HCT116 (cell line): ENCODE measurements at regions of chr22 and their contacts with region 1.

Region 1: GRCh38 chr22:32985899-32986765 is 72.0 kb downstream of the SYN3 start:
- DNase-seq: peak; percentile 57
- ATAC-seq: peak; percentile 99
- H3K4me3 ChIP-seq: no peak overlapping the region
- H3K27ac ChIP-seq: no peak overlapping the region
- H3K4me1 ChIP-seq: peaks cover 0 to 2% of the 10 kb centered on the region in 2 experiments; a peak in 1 of 4 replicates
- H3K27me3 ChIP-seq: no peaks in the 10 kb centered on the region
- CTCF ChIP-seq: peak; percentile 44 to 86 (median 75); a peak in 5 of 6 replicates
- POLR2A ChIP-seq: no peak
- RAD21 ChIP-seq: peak; percentile 69

Region 2: DNA sequence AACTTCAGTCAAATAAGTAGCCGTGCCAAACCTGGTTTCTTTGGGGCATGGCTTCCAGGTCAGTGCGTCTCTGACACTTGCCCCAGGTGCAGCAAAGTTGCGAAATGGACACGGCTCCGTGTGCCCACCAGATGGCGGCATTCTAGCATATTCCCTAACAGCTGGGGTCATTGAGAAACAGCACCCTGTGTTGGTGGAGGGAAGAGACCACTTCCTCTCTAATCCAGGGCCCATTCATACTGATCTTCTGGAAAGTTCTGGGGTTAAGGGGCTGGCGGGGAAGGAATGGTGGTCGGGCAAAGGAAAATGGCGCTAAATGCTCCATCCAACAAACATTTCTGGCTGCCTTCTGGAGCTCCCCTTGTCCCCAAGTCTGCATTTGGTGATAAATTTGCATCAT is 325.8 kb before region 1 on chr22:
- CTCF ChIA-PET with region 1: interaction called, 10 read pairs
- POLR2A ChIA-PET with region 1: no interaction called
- RAD21 ChIA-PET with region 1: no interaction called
- intact Hi-C with region 1: loop called (anchors 1 kb)
- DNase-seq: peak; percentile 37
- ATAC-seq: peak; percentile 94
- H3K4me3 ChIP-seq: no peak overlapping the region
- H3K27ac ChIP-seq: no peak overlapping the region
- H3K4me1 ChIP-seq: no peaks in the 10 kb centered on the region
- H3K27me3 ChIP-seq: peaks cover 19% of the 10 kb centered on the region; the same call in 1 of the 2 replicates
- CTCF ChIP-seq: peak; percentile 77 to 82 (median 80)
- POLR2A ChIP-seq: no peak
- RAD21 ChIP-seq: peak; percentile 85

Region 3: DNA sequence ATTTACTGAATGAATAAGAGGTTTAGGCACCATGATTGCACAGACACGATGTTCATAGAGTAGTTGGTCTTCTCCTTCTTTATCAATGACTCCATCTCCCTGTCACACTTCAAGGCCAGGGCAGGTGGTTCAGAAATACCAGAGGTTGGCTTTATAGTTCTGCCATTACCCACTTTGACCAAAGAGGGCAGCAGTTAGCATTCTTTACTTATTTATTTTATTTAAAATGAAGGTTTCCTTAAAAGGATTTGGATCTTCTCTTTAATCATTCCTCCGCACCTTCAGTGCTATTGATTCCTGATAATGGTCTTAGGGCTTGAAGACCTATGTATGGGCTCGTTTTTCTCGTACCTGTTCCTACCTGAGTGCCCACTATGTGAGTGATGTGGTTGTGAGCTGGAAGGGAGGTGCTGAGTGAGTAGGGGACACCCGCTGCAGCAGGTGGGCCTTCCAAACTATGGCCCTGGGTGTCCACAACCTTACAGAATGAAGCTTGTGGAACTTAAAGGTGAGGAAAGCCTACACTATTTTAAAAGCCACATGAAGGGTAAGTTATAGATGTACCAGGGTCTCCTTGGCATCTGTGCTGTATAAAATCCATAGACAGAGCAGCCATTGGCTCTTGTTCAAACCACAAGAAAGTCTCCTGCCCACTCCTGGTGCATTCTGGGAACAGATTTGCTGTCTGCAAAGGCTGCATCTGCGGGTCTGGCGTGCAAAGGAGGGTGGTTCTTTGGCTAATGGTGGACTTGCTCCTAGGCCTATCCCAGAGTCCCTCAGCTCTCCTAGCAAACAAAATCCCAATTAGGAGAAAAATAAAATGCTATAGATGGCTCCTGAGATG is 149.6 kb before region 1 on chr22:
- CTCF ChIA-PET with region 1: no interaction called
- POLR2A ChIA-PET with region 1: no interaction called
- RAD21 ChIA-PET with region 1: no interaction called
- intact Hi-C with region 1: loop called (anchors 10 kb)
- DNase-seq: no peak
- ATAC-seq: peak; percentile 66
- H3K4me3 ChIP-seq: no peak overlapping the region
- H3K27ac ChIP-seq: no peak overlapping the region
- H3K4me1 ChIP-seq: no peaks in the 10 kb centered on the region
- H3K27me3 ChIP-seq: peaks cover 23% of the 10 kb centered on the region; the same call in 1 of the 2 replicates
- CTCF ChIP-seq: peak in 2 of 3 experiments; percentile 50 to 57; a peak in 4 of 6 replicates
- POLR2A ChIP-seq: no peak
- RAD21 ChIP-seq: no peak

Region 4: GRCh38 chr22:32920032-32920628 is 66.0 kb before region 1 on chr22:
- CTCF ChIA-PET with region 1: no interaction called
- POLR2A ChIA-PET with region 1: no interaction called
- RAD21 ChIA-PET with region 1: no interaction called
- intact Hi-C with region 1: no loop called
- DNase-seq: no peak
- ATAC-seq: no peak
- H3K4me3 ChIP-seq: no peak overlapping the region
- H3K27ac ChIP-seq: no peak overlapping the region
- H3K4me1 ChIP-seq: peaks cover 5 to 8% of the 10 kb centered on the region in 2 experiments; a peak in 2 of 4 replicates
- H3K27me3 ChIP-seq: peaks cover 15% of the 10 kb centered on the region; the same call in 1 of the 2 replicates
- CTCF ChIP-seq: no peak
- POLR2A ChIP-seq: no peak
- RAD21 ChIP-seq: no peak